Activated CD4-positive, alpha-beta T cell treated with anti-CD3 and anti-CD28 coated beads, Interleukin-2, amount 10 ng/mL, durations not matched to agents 24 days and 14 days (primary cell): ENCODE measurements at regions of chr2 and their contacts with region 1.

Region 1: DNA sequence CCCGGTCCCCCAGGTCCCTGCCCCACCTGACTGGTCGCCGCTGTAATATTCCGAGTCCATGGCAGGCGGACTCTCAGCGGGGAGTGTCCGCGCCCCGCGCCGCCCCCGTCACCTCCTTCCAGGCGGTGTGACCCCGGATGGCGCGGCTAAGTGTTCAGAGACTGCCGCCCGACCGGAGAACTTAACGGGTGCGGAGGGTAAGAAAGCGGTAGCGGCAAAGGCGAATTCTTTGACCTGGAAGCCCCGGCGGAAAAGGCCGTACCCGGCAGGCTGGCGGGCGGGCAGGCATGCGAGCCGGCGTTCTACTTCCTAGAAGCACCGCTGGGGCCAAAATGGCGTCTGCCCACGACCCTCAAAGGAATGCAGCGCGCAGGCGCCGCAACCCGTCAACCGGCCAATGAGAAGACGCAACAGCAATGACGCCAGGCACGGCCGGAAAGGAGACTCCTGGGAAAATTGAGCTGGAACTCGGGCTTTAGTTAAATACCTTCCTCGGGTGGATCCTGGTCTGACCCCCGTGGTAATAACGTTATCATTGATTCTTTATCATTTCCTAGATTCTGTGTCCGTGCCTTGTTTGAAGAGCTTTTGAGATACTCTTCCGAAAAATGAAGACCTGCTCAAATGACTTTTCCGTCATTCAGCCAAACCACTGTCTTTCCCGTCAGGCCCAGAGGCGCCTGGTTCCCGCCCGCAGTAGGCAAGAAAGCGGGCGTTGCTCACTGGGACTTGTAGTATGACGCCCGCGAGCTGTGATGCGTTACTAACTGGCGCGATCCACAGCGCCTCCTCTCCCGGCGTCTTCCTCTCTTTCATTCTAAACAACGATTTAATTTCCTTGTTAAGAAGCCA is at the start of gene IWS1:
- DNase-seq: peak; percentile 98
- H3K4me3 Mint-ChIP-seq: peak within 1 kb of the TSS; percentile 96
- H3K27ac Mint-ChIP-seq: peak within 1 kb of the TSS; percentile 95
- H3K4me1 Mint-ChIP-seq: peaks cover 24% of the 10 kb centered on the region
- H3K27me3 Mint-ChIP-seq: peaks cover 7% of the 10 kb centered on the region
- total RNA-seq, gene IWS1: 57.6 and 61.9 TPM in 2 replicates

Region 2: DNA sequence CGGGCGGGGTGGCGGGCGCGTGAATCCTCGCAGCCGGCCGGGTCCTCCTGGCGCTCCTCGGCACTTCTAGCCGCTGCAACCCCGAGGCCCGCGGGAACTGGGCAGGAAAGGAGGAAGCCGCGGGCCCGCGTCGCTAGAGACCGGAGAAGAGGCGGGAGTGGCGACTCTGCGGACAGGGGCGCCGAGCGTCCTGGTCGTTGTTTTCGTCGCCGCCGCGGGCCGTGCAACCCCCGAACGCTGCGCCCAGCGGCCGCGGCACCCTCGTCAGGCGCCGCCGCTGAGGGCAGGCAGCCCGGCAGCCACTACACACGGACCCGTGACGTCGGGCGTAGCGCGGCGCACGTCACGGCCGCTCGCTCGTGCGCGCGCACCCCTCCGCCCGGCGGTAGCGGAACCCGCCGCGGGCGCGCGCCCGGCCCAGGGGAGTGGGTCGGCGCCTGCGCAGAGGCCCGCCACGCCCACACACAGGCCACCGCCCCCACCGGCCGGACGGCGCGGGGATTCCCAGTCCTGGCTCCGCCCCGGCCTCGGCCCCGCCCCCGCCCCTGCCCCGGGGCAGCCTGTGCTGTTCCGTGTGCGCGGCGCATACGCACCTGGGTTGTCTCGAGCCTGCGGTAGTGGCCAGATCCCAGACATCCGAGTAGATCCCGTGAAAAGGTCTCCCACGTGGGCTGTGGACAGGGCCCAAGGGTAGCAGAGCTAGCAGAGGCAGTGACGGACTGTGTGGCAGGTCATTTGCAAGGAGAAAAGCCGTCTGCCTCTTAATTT is 138.5 kb before region 1 on chr2 and contains the start of gene MAP3K2:
- intact Hi-C with region 1: loop called (anchors 1 kb)
- DNase-seq: peak; percentile 98
- H3K4me3 Mint-ChIP-seq: peak within 1 kb of the TSS; percentile 88
- H3K27ac Mint-ChIP-seq: peak within 1 kb of the TSS; percentile 98
- H3K4me1 Mint-ChIP-seq: peaks cover 63% of the 10 kb centered on the region
- H3K27me3 Mint-ChIP-seq: no peaks in the 10 kb centered on the region
- total RNA-seq, gene MAP3K2: 53.7 and 57.5 TPM in 2 replicates

Region 3: GRCh38 chr2:127563458-127564428 is 37.4 kb after region 1 on chr2:
- intact Hi-C with region 1: loop called (anchors 1 kb)
- DNase-seq: peak; percentile 84
- H3K4me3 Mint-ChIP-seq: peak overlapping the region; percentile 64
- H3K27ac Mint-ChIP-seq: peak overlapping the region; percentile 69
- H3K4me1 Mint-ChIP-seq: peaks cover 16% of the 10 kb centered on the region
- H3K27me3 Mint-ChIP-seq: peaks cover 43% of the 10 kb centered on the region

Region 4: GRCh38 chr2:127649684-127650040 is 123.3 kb after region 1 on chr2:
- intact Hi-C with region 1: loop called (anchors 1 kb)
- DNase-seq: peak; percentile 95
- H3K4me3 Mint-ChIP-seq: no peak overlapping the region
- H3K27ac Mint-ChIP-seq: peak overlapping the region; percentile 56
- H3K4me1 Mint-ChIP-seq: peaks cover 7% of the 10 kb centered on the region
- H3K27me3 Mint-ChIP-seq: no peaks in the 10 kb centered on the region

Region 5: GRCh38 chr2:127810619-127811396 is 284.4 kb after region 1 on chr2 and contains the start of gene WDR33:
- intact Hi-C with region 1: loop called (anchors 2 kb)
- DNase-seq: peak; percentile 98
- H3K4me3 Mint-ChIP-seq: peak within 1 kb of the TSS; percentile 86
- H3K27ac Mint-ChIP-seq: peak within 1 kb of the TSS; percentile 98
- H3K4me1 Mint-ChIP-seq: peaks cover 34% of the 10 kb centered on the region
- H3K27me3 Mint-ChIP-seq: peaks cover 1% of the 10 kb centered on the region
- total RNA-seq, gene WDR33: 76.7 and 79.5 TPM in 2 replicates